Activated T-helper 1 cell treated with anti-CD3 and anti-CD28 coated beads, Interleukin-12 subunit alpha, Interleukin-12 subunit beta, Interleukin-2, Interleukin-4 antibody, amounts not matched to agents 30 ng/mL and 10 ng/mL and 1 ng/mL, durations not matched to agents 14 hours and 24 hours and 36 hours (primary cell): ENCODE measurements at regions of chr7 and their contacts with region 1.

Region 1: DNA sequence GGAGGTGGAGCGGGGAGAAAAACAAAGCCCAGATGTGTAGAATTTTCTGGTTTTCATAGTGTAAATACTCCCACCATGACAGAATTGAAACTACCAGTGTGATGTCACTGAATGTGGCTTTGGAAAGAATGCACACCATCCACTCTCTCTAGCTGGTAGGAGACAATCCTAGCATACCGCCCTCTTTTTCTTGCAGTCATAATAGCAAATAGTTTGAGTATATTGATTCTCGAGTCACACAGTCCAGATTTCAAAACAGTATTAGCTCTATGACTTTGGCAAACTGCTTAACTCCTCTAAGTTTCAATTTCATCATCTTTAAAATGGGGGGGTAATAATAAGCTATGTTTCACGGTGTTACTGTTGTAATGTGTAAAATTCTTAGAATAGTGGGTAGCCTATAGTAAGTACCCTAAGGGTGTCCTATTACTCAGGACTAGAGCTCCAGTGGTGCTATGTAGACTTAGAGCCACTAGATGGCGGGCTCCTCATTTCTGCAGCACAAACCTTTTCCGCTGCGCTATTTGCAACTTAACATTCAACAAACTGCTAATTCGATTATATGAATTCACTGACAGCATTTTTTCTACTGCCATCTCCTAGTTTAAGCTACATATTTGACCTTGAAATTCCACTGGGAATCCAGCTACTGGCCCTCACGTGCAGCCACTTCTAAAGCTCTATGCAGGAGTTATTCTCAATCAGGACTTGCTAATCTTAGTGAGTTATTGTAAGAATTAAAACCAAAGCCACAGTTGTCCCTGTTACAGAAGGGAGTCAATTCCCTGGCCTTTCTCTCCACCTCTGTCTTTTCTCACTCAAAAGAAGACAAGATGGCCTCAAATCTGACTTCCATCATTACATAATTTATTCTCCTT is 18.7 kb downstream of the TAS2R40 start:
- DNase-seq: peak; percentile 65
- H3K4me3 Mint-ChIP-seq: no peak overlapping the region
- H3K27ac Mint-ChIP-seq: peak overlapping the region; percentile 74
- H3K4me1 Mint-ChIP-seq: peaks cover 54% of the 10 kb centered on the region
- H3K27me3 Mint-ChIP-seq: peaks cover 8% of the 10 kb centered on the region

Region 2: GRCh38 chr7:143263266-143264195 is 23.0 kb after region 1 on chr7 and contains the start of gene GSTK1:
- intact Hi-C with region 1: loop called (anchors 1 kb)
- DNase-seq: peak; percentile 81
- H3K4me3 Mint-ChIP-seq: peak within 1 kb of the TSS; percentile 98
- H3K27ac Mint-ChIP-seq: peak within 1 kb of the TSS; percentile 94
- H3K4me1 Mint-ChIP-seq: peaks cover 67% of the 10 kb centered on the region
- H3K27me3 Mint-ChIP-seq: no peaks in the 10 kb centered on the region
- total RNA-seq, gene GSTK1: 134 and 135 TPM in 2 replicates

Region 3: GRCh38 chr7:143287935-143288826 is 47.7 kb after region 1 on chr7 and contains the start of gene CASP2:
- intact Hi-C with region 1: loop called (anchors 1 kb)
- DNase-seq: peak; percentile 98
- H3K4me3 Mint-ChIP-seq: peak within 1 kb of the TSS; percentile 94
- H3K27ac Mint-ChIP-seq: peak within 1 kb of the TSS; percentile 92
- H3K4me1 Mint-ChIP-seq: peaks cover 63% of the 10 kb centered on the region
- H3K27me3 Mint-ChIP-seq: no peaks in the 10 kb centered on the region
- total RNA-seq, gene CASP2: 107 and 110 TPM in 2 replicates

Region 4: DNA sequence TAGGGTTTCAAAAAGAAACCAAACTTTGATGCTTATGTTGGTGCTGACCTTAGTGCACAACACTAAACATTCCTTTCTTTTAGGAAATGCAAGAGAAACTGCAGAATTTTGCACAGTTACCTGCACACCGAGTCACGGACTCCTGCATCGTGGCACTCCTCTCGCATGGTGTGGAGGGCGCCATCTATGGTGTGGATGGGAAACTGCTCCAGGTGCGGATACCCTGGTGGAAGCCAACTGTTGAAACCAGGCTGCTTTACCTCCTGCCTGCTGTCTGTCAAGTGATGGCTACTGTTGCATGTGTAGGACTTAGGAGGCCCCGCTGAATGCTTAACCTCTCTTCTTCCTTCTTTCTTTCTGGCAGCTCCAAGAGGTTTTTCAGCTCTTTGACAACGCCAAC is 59.3 kb after region 1 on chr7:
- intact Hi-C with region 1: loop called (anchors 1 kb)
- DNase-seq: peak; percentile 45
- H3K4me3 Mint-ChIP-seq: no peak overlapping the region
- H3K27ac Mint-ChIP-seq: no peak overlapping the region
- H3K4me1 Mint-ChIP-seq: peaks cover 57% of the 10 kb centered on the region
- H3K27me3 Mint-ChIP-seq: no peaks in the 10 kb centered on the region

Region 5: GRCh38 chr7:143305423-143306070 is 65.0 kb after region 1 on chr7:
- intact Hi-C with region 1: loop called (anchors 1 kb)
- DNase-seq: peak; percentile 30
- H3K4me3 Mint-ChIP-seq: no peak overlapping the region
- H3K27ac Mint-ChIP-seq: peak overlapping the region; percentile 25
- H3K4me1 Mint-ChIP-seq: peaks cover 69% of the 10 kb centered on the region
- H3K27me3 Mint-ChIP-seq: no peaks in the 10 kb centered on the region

Region 6: GRCh38 chr7:143362131-143363015 is 121.8 kb after region 1 on chr7 and contains the start of gene FAM131B:
- intact Hi-C with region 1: loop called (anchors 1 kb)
- DNase-seq: no peak
- H3K4me3 Mint-ChIP-seq: peak within 1 kb of the TSS; percentile 83
- H3K27ac Mint-ChIP-seq: no peak within 1 kb of the TSS
- H3K4me1 Mint-ChIP-seq: no peaks in the 10 kb centered on the region
- H3K27me3 Mint-ChIP-seq: peaks cover 76% of the 10 kb centered on the region
- total RNA-seq, gene FAM131B: 0.44 and 0.54 TPM in 2 replicates

Region 7: GRCh38 chr7:143416565-143417149 is 176.1 kb after region 1 on chr7:
- intact Hi-C with region 1: loop called (anchors 1 kb)
- DNase-seq: no peak
- H3K4me3 Mint-ChIP-seq: no peak overlapping the region
- H3K27ac Mint-ChIP-seq: no peak overlapping the region
- H3K4me1 Mint-ChIP-seq: peaks cover 4% of the 10 kb centered on the region
- H3K27me3 Mint-ChIP-seq: peaks cover 20% of the 10 kb centered on the region

Region 8: GRCh38 chr7:143484119-143484518 is 243.6 kb after region 1 on chr7:
- intact Hi-C with region 1: no loop called
- DNase-seq: no peak
- H3K4me3 Mint-ChIP-seq: no peak overlapping the region
- H3K27ac Mint-ChIP-seq: no peak overlapping the region
- H3K4me1 Mint-ChIP-seq: no peaks in the 10 kb centered on the region
- H3K27me3 Mint-ChIP-seq: peaks cover 2% of the 10 kb centered on the region